ENCODE measurements at regions of chr6 and their contacts with region 1.

Region 1: DNA sequence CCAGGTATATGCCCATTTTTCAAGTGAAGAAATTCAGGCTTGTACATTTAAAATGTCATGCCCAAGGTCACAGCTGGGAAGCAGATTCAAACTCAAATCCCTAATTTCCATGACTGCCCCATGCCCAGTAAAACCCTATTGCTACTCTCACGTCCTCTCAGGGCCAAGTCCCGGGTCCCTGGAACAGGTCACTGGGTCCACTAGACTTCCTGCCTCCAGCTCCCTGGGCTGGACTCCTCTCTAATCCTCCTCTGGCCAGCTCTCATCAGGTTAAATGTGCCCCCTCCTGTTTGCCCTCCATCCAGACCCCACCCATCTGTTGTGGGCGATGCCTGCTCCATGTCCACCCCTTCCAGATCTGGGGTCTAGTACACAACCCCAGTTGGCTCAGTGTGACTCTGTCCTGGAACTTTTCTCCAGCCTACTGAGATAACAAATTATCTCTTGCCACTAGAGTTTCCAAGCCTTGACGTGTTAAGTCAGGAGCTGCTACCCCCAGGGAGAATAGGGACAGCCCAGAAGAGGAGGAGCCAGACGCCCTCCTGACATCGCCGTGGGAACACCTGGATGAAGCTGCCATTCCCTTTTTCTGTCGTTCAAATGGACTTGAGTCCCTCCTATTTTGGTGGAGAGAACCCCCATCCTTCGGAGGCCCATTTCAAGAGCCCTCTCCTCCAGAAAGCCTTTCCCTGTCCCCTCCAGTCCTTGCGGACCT is 3.7 kb upstream of the SPDEF start:
- DNase-seq: no peak
- H3K4me3 ChIP-seq: no peak overlapping the region
- H3K27ac ChIP-seq: no peak overlapping the region
- H3K4me1 ChIP-seq: no peaks in the 10 kb centered on the region; a peak in 1 of 4 replicates
- H3K27me3 ChIP-seq: no peaks in the 10 kb centered on the region
- CTCF ChIP-seq: no peak
- EP300 ChIP-seq: no peak
- RAD21 ChIP-seq: no peak

Region 2: DNA sequence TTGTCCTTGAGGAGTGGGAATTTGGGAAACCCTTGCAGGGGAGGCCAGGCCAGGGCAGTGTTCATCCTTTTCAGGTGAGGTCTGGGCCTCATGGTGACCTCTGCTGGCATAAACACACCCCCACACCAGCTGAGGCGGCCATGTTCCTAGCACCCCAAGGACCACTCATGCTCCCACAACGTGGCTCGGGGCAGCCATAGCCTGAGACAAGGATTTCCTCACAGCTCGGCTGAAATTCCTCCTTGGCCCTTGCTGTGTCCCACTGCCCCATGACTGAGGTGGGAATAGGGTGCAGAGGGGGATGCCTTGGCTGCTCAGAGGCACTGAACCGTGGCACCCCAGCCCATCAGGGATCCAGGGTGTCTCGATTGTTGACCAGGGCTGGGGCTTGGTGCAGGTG is 23.7 kb after region 1 on chr6:
- CTCF ChIA-PET with region 1: interaction called, 10 read pairs
- POLR2A ChIA-PET with region 1: no interaction called
- DNase-seq: no peak
- H3K4me3 ChIP-seq: no peak overlapping the region
- H3K27ac ChIP-seq: no peak overlapping the region
- H3K4me1 ChIP-seq: peaks cover 0 to 21% of the 10 kb centered on the region in 2 experiments; a peak in 1 of 4 replicates
- H3K27me3 ChIP-seq: no peaks in the 10 kb centered on the region
- CTCF ChIP-seq: peak; percentile 51
- EP300 ChIP-seq: no peak
- RAD21 ChIP-seq: peak; percentile 36